A549 (cell line): ENCODE measurements at regions of chr9 and their contacts with region 1.

Region 1: GRCh38 chr9:93111371-93112115 is 15.5 kb downstream of the CARD19 start:
- DNase-seq: no peak
- ATAC-seq: no peak
- H3K4me3 ChIP-seq: no peak overlapping the region
- H3K27ac ChIP-seq: peak overlapping the region in 1 of 2 experiments; percentile 81; a peak in 3 of 6 replicates
- H3K4me1 ChIP-seq: peaks cover 54% of the 10 kb centered on the region
- CTCF ChIP-seq: no peak
- EP300 ChIP-seq: no peak
- POLR2A ChIP-seq: no peak
- RAD21 ChIP-seq: no peak

Region 2: GRCh38 chr9:92931606-92932005 is 179.9 kb before region 1 on chr9:
- CTCF ChIA-PET with region 1: no interaction called
- POLR2A ChIA-PET with region 1: no interaction called
- DNase-seq: no peak
- ATAC-seq: no peak
- H3K4me3 ChIP-seq: no peak overlapping the region
- H3K27ac ChIP-seq: no peak overlapping the region
- H3K4me1 ChIP-seq: peaks cover 13% of the 10 kb centered on the region; the same call in 2 of the 3 replicates
- CTCF ChIP-seq: no peak
- EP300 ChIP-seq: no peak
- POLR2A ChIP-seq: no peak
- RAD21 ChIP-seq: no peak

Region 3: GRCh38 chr9:92954049-92954861 is 157.3 kb before region 1 on chr9:
- CTCF ChIA-PET with region 1: interaction called, 16 read pairs
- POLR2A ChIA-PET with region 1: no interaction called
- DNase-seq: no peak
- ATAC-seq: no peak
- H3K4me3 ChIP-seq: no peak overlapping the region
- H3K27ac ChIP-seq: no peak overlapping the region
- H3K4me1 ChIP-seq: peaks cover 4% of the 10 kb centered on the region; the same call in 1 of the 3 replicates
- CTCF ChIP-seq: no peak
- EP300 ChIP-seq: no peak
- POLR2A ChIP-seq: no peak
- RAD21 ChIP-seq: no peak

Region 4: GRCh38 chr9:93013856-93014582 is 97.5 kb before region 1 on chr9:
- CTCF ChIA-PET with region 1: interaction called, 11 read pairs
- POLR2A ChIA-PET with region 1: no interaction called
- DNase-seq: no peak
- ATAC-seq: no peak
- H3K4me3 ChIP-seq: no peak overlapping the region
- H3K27ac ChIP-seq: no peak overlapping the region
- H3K4me1 ChIP-seq: no peaks in the 10 kb centered on the region
- CTCF ChIP-seq: no peak
- EP300 ChIP-seq: no peak
- POLR2A ChIP-seq: no peak
- RAD21 ChIP-seq: no peak

Region 5: GRCh38 chr9:93126825-93127368 is 15.4 kb after region 1 on chr9:
- CTCF ChIA-PET with region 1: interaction called, 23 read pairs
- POLR2A ChIA-PET with region 1: no interaction called
- DNase-seq: no peak
- ATAC-seq: no peak
- H3K4me3 ChIP-seq: no peak overlapping the region
- H3K27ac ChIP-seq: peak overlapping the region in 1 of 2 experiments; percentile 23; a peak in 1 of 6 replicates
- H3K4me1 ChIP-seq: peaks cover 20% of the 10 kb centered on the region
- CTCF ChIP-seq: no peak
- EP300 ChIP-seq: no peak
- POLR2A ChIP-seq: no peak
- RAD21 ChIP-seq: no peak

Region 6: GRCh38 chr9:93154315-93154903 is 42.9 kb after region 1 on chr9:
- CTCF ChIA-PET with region 1: interaction called, 23 read pairs
- POLR2A ChIA-PET with region 1: no interaction called
- DNase-seq: peak; percentile 47 to 76
- ATAC-seq: peak; percentile 71 to 86
- H3K4me3 ChIP-seq: no peak overlapping the region
- H3K27ac ChIP-seq: no peak overlapping the region
- H3K4me1 ChIP-seq: peaks cover under 1% of the 10 kb centered on the region; the same call in 1 of the 3 replicates
- CTCF ChIP-seq: peak; percentile 46
- EP300 ChIP-seq: no peak
- POLR2A ChIP-seq: no peak
- RAD21 ChIP-seq: peak; percentile 24 to 51; a peak in 2 of 5 replicates

Region 7: DNA sequence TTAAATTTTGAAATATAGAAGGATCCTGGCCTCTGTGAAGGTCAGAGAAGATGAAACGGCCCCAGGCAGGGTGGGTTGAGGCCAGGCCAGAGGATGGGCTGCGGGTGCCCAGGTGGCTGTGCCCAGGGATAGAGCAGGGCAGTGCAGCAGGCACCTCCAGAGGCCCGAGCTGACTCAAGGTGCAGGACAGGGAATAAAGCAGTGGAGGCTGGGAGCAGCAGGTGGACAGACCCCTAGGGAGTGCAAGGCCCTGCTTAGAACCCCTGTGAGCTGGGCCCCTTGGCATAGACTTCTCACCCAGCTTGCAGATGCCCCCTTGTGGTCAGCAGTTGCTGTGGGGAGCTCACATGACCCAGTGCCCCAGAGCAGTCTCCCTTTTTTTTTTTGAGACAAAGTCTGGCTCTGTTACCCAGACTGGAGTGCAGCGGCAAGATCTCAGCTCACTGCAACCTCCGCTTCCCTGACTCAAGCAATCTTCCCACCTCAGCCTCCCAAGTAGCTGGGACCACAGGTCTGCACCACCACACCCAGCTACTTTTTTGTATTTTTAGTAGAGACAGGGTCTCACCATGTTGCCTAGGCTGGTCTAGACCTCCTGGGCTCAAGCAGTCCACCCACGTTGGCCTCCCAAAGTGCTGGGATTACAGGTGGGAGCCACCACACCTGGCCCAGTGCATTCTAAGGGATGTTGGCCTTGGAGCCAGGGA is 191.2 kb after region 1 on chr9:
- CTCF ChIA-PET with region 1: interaction called, 116 read pairs
- POLR2A ChIA-PET with region 1: no interaction called
- DNase-seq: peak; percentile 73 to 74
- ATAC-seq: peak; percentile 71 to 88
- H3K4me3 ChIP-seq: no peak overlapping the region
- H3K27ac ChIP-seq: 0 out of 6 replicates have a peak overlapping the region, but pooled peaks of 1 of the 2 experiments have one; percentile 46
- H3K4me1 ChIP-seq: peaks cover 4% of the 10 kb centered on the region; the same call in 1 of the 3 replicates
- CTCF ChIP-seq: peak; percentile 66
- EP300 ChIP-seq: no peak
- POLR2A ChIP-seq: no peak
- RAD21 ChIP-seq: peak; percentile 72 to 74